ENCODE measurements at regions of chr3 and their contacts with region 1.

Region 1: DNA sequence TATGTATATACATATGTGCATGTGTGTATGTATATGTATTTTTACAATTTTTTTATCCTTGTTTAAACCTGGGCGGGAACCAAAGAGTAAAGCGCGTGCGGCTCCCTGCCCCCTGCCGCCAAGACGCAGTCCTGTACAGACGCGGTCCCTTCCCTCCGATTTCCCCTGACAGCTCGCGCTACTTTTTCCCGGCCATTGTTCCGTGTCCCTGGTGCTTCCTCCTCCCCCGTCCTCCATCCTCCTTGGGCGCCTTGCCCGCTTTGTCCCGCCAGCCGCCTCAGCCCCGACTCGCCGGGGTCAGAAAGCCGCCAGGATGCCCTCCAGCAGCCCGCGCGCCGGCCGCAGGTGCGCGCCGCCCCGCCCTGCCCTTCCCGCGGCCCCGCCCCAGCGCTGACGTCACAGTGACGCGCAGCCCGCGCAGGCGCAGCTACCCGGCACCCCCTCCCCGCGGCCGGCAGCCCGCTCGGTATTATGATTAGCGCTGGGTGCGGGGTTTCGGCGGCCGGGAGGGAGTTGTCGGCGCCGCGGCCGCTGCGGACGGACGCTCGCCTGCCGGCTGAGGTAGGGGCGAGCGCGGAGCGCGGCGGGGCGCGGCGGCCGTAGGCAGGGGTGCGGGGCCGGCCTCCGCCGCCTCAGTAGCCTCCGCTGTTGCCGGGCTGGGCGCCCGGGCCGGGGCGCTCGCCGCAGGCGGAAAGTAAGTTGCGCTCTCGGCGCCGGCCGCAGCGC is at the start of gene SNRK:
- DNase-seq: peak; percentile 89
- H3K4me3 Mint-ChIP-seq: peak within 1 kb of the TSS; percentile 98
- H3K27ac Mint-ChIP-seq: peak within 1 kb of the TSS; percentile 97
- H3K4me1 Mint-ChIP-seq: peaks cover 49% of the 10 kb centered on the region
- H3K27me3 Mint-ChIP-seq: peaks cover 2% of the 10 kb centered on the region
- total RNA-seq, gene SNRK: 37.7 and 38.1 TPM in 2 replicates

Region 2: GRCh38 chr3:42772670-42773408 is 513.4 kb before region 1 on chr3 and contains the start of gene CCDC13:
- intact Hi-C with region 1: loop called (anchors 5 kb)
- DNase-seq: peak; percentile 86
- H3K4me3 Mint-ChIP-seq: peak within 1 kb of the TSS; percentile 85
- H3K27ac Mint-ChIP-seq: peak within 1 kb of the TSS; percentile 85
- H3K4me1 Mint-ChIP-seq: peaks cover 12% of the 10 kb centered on the region
- H3K27me3 Mint-ChIP-seq: peaks cover 9% of the 10 kb centered on the region
- total RNA-seq, gene CCDC13: 0.32 TPM in 1 of 2 replicates, not detected in the other

Region 3: DNA sequence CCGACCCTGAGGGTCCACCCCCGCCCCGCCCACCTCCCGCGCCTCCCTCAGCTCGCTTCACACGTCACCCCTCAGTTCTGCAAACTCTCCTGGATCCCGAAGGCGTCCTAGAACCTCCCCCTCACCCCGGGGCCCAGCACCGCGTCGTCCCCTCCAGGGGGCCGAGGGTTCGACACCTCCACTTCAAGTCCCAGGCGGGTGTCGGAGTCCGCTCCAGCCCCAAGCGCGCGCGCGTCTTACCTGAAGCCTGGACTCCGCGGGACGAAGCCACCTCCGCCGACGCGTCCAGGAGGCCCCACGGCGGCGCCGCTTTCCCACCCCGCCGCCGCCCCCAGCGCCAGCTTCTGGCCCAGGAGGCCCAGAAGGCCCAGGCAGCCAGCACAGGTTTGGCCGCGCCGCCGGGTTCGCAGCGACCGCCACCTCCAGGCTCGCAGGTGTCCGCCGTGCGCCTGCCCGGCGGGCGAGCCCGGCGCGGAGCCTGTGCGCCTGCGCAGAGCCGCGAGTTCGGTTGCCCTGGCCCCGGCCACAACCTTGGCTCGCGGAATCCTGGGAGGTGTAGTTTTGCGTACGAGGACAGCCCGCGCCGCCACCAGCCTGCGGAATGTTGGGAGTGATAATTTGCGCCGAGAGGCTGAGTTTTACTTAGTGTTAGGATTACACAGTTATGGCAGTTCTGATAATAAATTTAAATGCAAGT is 180.5 kb before region 1 on chr3 and contains the start of gene POMGNT2:
- intact Hi-C with region 1: loop called (anchors 2 kb)
- DNase-seq: peak; percentile 82
- H3K4me3 Mint-ChIP-seq: peak within 1 kb of the TSS; percentile 72
- H3K27ac Mint-ChIP-seq: no peak within 1 kb of the TSS
- H3K4me1 Mint-ChIP-seq: peaks cover 12% of the 10 kb centered on the region
- H3K27me3 Mint-ChIP-seq: peaks cover 4% of the 10 kb centered on the region
- total RNA-seq, gene POMGNT2: 8.3 and 9.8 TPM in 2 replicates

Region 4: GRCh38 chr3:43132870-43133636 is 153.2 kb before region 1 on chr3:
- intact Hi-C with region 1: no loop called
- DNase-seq: no peak
- H3K4me3 Mint-ChIP-seq: no peak overlapping the region
- H3K27ac Mint-ChIP-seq: no peak overlapping the region
- H3K4me1 Mint-ChIP-seq: no peaks in the 10 kb centered on the region
- H3K27me3 Mint-ChIP-seq: peaks cover 7% of the 10 kb centered on the region

Region 5: DNA sequence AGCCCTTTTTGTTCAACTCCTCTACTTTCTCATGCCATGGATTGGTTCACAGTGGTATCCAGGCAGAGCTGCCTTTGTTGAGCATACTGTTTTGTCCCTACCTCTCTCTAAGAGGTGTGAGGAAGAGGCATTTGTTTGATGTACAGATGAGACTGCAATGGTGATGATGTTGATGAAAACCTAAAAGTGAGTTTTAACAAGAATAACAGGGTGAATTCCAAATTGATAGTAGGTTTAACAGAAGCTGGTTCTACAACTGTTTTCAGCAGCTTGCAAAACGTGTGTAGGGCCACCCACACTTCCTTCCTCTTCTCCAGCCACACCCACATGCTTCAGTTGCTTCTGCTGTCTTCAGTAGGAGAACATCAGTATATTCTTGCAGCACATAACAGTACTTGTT is 10.3 kb after region 1 on chr3:
- intact Hi-C with region 1: loop called (anchors 1 kb)
- DNase-seq: peak; percentile 63
- H3K4me3 Mint-ChIP-seq: peak overlapping the region; percentile 80
- H3K27ac Mint-ChIP-seq: peak overlapping the region; percentile 87
- H3K4me1 Mint-ChIP-seq: peaks cover 82% of the 10 kb centered on the region
- H3K27me3 Mint-ChIP-seq: no peaks in the 10 kb centered on the region

Region 6: DNA sequence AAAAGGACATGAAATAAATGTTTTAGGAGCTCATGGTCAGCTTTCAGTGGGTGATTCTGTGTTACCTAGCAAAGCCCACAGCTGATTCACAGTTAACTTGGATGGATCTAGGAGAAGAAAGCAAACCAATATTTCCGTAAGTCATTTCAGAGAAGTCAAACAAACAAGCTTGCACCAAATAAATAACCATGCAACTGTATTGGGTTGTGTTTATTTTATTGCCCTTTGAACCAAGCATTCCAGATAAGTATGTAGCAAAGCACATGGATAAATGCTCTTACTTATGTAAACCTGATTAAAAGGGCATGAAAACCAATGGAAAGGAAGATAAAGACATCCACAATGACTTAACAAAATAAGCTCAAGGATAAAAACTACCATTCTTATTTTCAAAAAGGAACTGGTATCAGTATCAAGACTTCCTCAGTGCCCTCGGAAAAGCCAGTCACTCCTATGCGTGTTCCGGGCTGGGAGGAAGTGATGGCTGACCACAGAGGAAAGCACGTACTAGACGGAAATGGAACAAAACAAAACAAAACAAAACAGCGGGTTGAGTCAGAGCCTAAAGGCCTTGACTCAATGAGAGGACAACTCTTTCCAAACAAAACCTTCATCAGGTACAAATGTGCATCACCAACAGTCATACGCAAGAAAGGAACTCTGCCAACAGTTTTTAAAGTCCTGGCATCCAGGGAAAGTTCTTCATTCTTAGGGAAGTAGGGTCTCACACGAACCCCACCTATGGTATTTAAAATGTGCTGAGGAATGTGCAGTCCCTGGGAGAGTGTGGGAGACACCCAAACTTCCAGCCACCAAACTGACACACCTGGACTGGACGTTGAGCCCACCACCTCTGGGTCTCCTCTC is 103.3 kb after region 1 on chr3:
- intact Hi-C with region 1: loop called (anchors 1 kb)
- DNase-seq: peak; percentile 72
- H3K4me3 Mint-ChIP-seq: peak overlapping the region; percentile 35
- H3K27ac Mint-ChIP-seq: peak overlapping the region; percentile 81
- H3K4me1 Mint-ChIP-seq: peaks cover 52% of the 10 kb centered on the region
- H3K27me3 Mint-ChIP-seq: peaks cover 6% of the 10 kb centered on the region

Region 7: GRCh38 chr3:43621656-43622432 is 335.6 kb after region 1 on chr3 and contains the start of gene ANO10:
- intact Hi-C with region 1: loop called (anchors 1 kb)
- DNase-seq: peak; percentile 90
- H3K4me3 Mint-ChIP-seq: peak within 1 kb of the TSS; percentile 91
- H3K27ac Mint-ChIP-seq: peak within 1 kb of the TSS; percentile 70
- H3K4me1 Mint-ChIP-seq: peaks cover 32% of the 10 kb centered on the region
- H3K27me3 Mint-ChIP-seq: peaks cover 26% of the 10 kb centered on the region
- total RNA-seq, gene ANO10: 4.2 and 4.6 TPM in 2 replicates

Region 8: DNA sequence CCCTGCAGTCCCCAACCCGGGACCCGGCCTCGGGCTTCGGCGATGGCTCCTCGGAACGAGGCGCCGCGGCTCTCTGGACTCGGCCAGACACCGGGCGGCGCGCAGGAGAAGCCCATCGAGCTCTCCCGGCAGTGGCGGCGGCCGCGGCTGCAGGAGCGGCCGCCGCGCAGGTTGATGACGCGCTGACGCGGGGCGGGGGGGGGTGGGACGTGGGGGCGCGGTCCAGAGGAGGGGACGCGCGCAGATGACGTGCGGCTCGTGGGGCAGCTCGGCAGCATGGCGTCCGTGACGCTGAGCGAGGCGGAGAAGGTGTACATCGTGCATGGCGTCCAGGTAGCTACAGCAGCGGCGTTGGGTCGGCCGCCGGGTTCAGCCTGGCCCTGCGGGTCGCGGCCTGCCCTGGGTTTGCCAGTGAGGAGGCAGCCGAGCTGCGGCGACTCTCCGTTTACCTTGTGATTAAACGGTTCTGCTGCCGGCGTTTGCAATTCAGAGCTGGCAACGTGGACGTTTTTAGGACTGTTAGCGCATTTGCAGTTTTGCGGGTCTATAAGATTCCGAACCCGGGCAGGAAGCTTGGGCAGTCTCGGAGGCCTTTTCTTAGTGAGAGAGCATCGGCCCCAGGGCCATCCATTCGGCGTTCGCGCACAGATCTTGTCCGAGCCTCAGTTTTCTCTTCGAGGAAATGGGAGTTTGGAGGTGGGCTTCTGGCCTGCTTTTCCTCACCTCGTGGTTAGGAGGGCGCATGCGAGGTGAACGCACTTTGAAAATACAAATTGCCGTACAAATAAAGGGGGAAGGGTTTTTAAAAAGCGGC is 1689.9 kb after region 1 on chr3 and contains the starts of genes EXOSC7 and ZDHHC3:
- intact Hi-C with region 1: loop called (anchors 10 kb)
- DNase-seq: peak; percentile 81
- H3K4me3 Mint-ChIP-seq: peak within 1 kb of the TSS; percentile 99
- H3K27ac Mint-ChIP-seq: peak within 1 kb of the TSS; percentile 96
- H3K4me1 Mint-ChIP-seq: peaks cover 58% of the 10 kb centered on the region
- H3K27me3 Mint-ChIP-seq: no peaks in the 10 kb centered on the region
- total RNA-seq, gene EXOSC7: 93.6 and 94.4 TPM in 2 replicates
- total RNA-seq, gene ZDHHC3: 46.6 and 47.5 TPM in 2 replicates

Measured in activated T-helper 1 cell treated with anti-CD3 and anti-CD28 coated beads, Interleukin-12 subunit alpha, Interleukin-12 subunit beta, Interleukin-2, Interleukin-4 antibody, amounts not matched to agents 30 ng/mL and 10 ng/mL and 1 ng/mL, durations not matched to agents 14 hours and 24 hours and 36 hours (primary cell).